ENCODE measurements at regions of chr11 and their contacts with region 1.

Region 1: GRCh38 chr11:74388678-74389327 is 9.4 kb downstream of the PGM2L1 start:
- DNase-seq: peak in 1 of 2 experiments; percentile 61
- H3K4me3 ChIP-seq: no peak overlapping the region
- H3K27ac ChIP-seq: no peak overlapping the region
- H3K4me1 ChIP-seq: peaks cover 0 to 3% (median 2%) of the 10 kb centered on the region in 4 experiments; a peak in 3 of 7 replicates
- H3K27me3 ChIP-seq: no peaks in the 10 kb centered on the region
- CTCF ChIP-seq: peak in 2 of 3 experiments; percentile 50 to 72; a peak in 2 of 4 replicates
- EP300 ChIP-seq: no peak
- POLR2A ChIP-seq: no peak
- RAD21 ChIP-seq: peak; percentile 53 to 55

Region 2: DNA sequence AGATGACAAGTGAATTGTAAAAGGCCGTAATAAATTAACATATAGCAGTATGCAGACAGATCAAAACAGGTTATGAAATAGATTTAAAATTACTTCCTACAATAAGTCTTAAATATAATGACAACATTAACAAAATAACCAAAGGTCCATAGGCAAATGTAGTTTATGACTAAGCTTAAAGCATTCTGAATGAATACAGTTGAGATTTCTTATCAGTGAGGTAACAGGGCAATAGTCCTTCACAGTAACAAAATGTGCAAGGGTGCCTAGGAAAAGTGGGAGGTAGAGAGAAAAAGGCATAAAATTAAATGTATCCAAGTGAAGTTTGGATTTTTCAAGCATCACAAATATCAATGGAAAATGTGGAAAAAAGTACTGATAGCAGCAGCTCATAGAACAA is 56.5 kb before region 1 on chr11:
- CTCF ChIA-PET with region 1: no interaction called
- POLR2A ChIA-PET with region 1: no interaction called
- DNase-seq: no peak
- H3K4me3 ChIP-seq: no peak overlapping the region
- H3K27ac ChIP-seq: no peak overlapping the region
- H3K4me1 ChIP-seq: no peaks in the 10 kb centered on the region
- H3K27me3 ChIP-seq: no peaks in the 10 kb centered on the region
- CTCF ChIP-seq: no peak
- EP300 ChIP-seq: no peak
- POLR2A ChIP-seq: no peak
- RAD21 ChIP-seq: no peak

Region 3: DNA sequence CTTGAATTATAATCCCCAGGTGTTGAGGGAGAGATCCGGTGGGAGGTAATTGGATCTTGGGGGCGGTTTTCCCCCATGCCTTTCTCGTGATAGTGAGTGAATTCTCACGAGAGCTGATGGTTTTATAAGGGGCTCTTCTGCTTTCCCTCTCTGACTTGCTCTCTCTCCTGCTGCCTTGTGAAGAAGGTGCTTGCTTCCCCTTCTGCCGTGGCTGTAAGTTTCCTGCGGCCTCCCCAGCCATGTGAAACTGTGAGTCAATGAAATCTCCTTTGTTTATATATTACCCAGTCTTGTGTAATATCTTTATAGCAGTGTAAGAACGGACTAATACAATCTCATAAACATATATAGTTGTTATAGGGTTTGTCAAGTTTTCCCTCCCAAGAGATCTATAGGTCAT is 45.7 kb after region 1 on chr11:
- CTCF ChIA-PET with region 1: interaction called, 11 read pairs
- POLR2A ChIA-PET with region 1: no interaction called
- DNase-seq: no peak
- H3K4me3 ChIP-seq: no peak overlapping the region
- H3K27ac ChIP-seq: no peak overlapping the region
- H3K4me1 ChIP-seq: no peaks in the 10 kb centered on the region
- H3K27me3 ChIP-seq: peaks cover 0 to 2% (median 0%) of the 10 kb centered on the region in 4 experiments; a peak in 1 of 7 replicates
- CTCF ChIP-seq: no peak
- EP300 ChIP-seq: no peak
- POLR2A ChIP-seq: no peak
- RAD21 ChIP-seq: no peak

Region 4: DNA sequence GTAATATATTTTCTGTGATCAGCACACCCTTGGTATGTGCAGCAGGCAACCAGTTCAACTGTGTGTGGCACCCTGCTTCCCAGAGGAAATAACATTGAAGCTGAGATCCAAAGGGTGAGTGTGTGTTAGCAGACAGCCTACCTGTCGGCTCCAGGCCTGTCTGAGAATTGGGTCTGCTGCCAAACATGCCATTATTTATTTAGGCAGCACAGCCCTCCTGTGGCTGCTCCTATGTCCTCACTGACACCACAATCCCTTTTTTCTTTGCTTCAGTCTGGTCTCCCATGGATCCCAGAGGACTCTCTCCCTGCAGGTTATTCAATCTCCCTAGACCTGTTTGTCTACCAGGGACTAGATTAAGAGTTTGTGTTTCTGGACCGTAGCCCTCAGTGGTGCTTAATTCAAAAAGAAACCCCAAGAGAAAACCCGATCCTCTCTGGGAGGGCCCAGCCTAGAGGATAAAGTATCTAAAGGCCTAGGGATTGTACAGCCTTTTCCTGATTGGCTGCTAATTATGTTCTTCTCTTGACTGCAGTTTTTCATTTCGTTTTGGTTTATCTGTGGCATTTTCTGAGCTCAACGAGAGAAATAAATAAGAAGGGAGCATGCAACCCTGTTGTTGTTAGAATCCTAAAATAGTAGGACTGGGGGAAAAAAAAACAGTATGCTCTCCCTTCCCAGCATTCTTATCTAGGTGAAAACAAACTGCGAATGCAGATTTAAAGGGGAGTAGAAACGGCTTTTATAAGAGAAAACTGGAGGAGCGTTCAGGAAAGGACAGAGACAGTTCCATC is 54.5 kb after region 1 on chr11:
- CTCF ChIA-PET with region 1: interaction called, 18 read pairs
- POLR2A ChIA-PET with region 1: no interaction called
- DNase-seq: no peak
- H3K4me3 ChIP-seq: no peak overlapping the region
- H3K27ac ChIP-seq: no peak overlapping the region
- H3K4me1 ChIP-seq: peaks cover 0 to 7% (median 4%) of the 10 kb centered on the region in 4 experiments; a peak in 4 of 7 replicates
- H3K27me3 ChIP-seq: no peaks in the 10 kb centered on the region
- CTCF ChIP-seq: peak in 1 of 3 experiments; percentile 12; a peak in 1 of 4 replicates
- EP300 ChIP-seq: no peak
- POLR2A ChIP-seq: no peak
- RAD21 ChIP-seq: peak; percentile 41 to 49